Right cardiac atrium (tissue), 5 donors: ENCODE measurements at regions of chr15 and their contacts with region 1.

Region 1: DNA sequence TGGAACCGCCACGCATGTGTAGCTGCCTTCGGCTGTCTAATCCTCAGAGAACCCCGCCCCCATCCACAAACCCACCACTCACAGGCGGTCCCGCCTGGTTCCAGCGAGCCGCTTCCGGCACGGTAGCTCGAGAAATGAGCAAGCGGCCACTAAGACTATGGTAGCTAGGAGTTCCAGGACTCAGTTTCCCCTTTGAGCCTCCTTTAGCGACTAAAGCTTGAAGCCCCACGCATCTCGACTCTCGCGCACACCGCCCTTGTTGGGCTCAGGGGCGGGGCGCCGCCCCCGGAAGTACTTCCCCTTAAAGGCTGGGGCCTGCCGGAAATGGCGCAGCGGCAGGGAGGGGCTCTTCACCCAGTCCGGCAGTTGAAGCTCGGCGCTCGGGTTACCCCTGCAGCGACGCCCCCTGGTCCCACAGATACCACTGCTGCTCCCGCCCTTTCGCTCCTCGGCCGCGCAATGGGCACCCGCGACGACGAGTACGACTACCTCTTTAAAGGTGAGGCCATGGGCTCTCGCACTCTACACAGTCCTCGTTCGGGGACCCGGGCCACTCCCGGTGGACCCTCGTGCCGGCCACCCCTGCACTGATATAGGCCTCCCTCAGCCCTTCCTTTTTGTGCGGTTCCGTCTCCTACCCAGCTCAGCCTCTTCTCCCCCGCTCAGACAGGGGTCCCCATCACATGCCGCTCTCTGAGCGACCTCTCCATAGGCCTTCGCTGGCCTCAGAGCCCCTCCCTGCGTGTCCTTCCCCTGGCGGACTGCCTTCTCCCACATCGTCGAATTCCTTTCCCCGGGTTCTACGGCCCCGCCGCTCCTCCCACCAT is at the start of gene RAB11A:
- DNase-seq: peak; percentile 98 to 99 (median 98)
- ATAC-seq: peak; percentile 97 to 99
- H3K4me3 ChIP-seq: peak within 1 kb of the TSS; percentile 79
- H3K27ac ChIP-seq: peak within 1 kb of the TSS; percentile 95
- H3K4me1 ChIP-seq: no peaks in the 10 kb centered on the region
- H3K27me3 ChIP-seq: no peaks in the 10 kb centered on the region
- total RNA-seq, gene RAB11A: 150 to 180 (median 163) TPM

Region 2: DNA sequence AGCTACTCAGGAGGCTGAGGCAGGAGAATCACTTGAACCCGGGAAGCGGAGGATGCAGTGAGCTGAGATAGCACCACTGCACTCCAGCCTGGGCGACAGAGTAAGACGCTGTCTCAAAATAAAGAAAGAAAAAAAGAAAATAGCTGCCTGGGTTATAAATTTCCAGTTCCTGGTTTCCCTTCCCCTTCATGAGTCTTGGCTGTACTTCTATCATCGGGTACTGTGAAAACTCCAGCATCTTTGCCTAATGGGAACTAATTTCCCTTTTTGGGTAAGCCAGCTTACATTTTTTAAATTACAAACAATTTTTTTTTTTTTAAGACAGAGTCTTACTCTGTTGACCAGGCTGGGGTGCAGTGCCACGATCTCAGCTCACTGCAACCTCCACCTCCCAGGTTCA is 92.3 kb before region 1 on chr15:
- intact Hi-C with region 1: no loop called
- DNase-seq: no peak
- ATAC-seq: no peak
- H3K4me3 ChIP-seq: no peak overlapping the region
- H3K27ac ChIP-seq: no peak overlapping the region
- H3K4me1 ChIP-seq: peaks cover 5% of the 10 kb centered on the region
- H3K27me3 ChIP-seq: no peaks in the 10 kb centered on the region

Region 3: GRCh38 chr15:65792130-65792987 is 77.0 kb before region 1 on chr15 and contains the start of gene DENND4A:
- intact Hi-C with region 1: loop called in 1 of 4 experiments (anchors 10 kb)
- DNase-seq: peak; percentile 98 to 99 (median 99)
- ATAC-seq: peak; percentile 98
- H3K4me3 ChIP-seq: peak within 1 kb of the TSS; percentile 90
- H3K27ac ChIP-seq: peak within 1 kb of the TSS; percentile 99
- H3K4me1 ChIP-seq: no peaks in the 10 kb centered on the region
- H3K27me3 ChIP-seq: no peaks in the 10 kb centered on the region
- total RNA-seq, gene DENND4A: 19.2 to 27.0 (median 20.0) TPM